ENCODE measurements at regions of chr6 and their contacts with region 1.

Region 1: DNA sequence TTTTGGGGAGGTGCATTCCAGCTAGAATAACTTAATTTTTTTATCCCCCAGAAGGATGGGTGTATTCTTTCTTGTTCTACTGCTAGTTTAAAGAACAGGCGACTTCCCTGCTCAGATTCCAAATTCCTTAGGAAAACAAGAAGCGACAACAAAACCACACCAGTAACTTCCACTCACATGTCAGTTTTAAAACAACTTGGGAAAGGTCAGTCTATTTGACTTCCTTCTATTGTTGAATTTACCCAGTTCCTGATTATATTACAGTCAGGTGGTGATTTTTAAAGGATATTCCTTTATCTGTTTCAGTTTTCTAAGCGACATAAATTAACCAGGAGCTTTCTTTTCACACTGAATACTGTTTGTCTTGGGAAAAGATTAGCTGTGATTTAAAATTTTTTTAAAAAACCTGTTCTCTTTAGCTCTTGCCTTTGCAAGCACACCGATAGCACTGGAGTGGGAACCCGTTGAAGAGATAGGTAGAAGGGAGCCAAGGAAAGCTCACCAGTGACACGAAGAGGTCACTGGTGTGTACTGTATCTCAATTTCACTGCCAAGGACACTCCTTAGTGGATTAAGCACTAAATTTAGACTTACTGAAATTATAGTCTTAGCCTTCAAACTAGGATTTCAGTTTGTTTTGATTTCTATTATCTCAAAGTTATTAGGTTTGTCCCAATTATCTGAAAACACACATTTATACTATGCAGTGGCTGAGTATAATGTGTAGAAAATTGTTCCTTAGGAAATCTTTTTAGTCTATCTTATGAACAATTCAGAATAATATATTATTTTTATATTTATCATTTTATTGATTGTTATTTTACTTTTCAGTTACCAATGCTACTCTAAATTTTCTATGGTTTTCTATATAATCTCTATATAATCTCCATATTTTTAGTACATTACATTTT is 22.3 kb downstream of the MARCKS start:
- DNase-seq: peak; percentile 51
- ATAC-seq: peak; percentile 98

Region 2: DNA sequence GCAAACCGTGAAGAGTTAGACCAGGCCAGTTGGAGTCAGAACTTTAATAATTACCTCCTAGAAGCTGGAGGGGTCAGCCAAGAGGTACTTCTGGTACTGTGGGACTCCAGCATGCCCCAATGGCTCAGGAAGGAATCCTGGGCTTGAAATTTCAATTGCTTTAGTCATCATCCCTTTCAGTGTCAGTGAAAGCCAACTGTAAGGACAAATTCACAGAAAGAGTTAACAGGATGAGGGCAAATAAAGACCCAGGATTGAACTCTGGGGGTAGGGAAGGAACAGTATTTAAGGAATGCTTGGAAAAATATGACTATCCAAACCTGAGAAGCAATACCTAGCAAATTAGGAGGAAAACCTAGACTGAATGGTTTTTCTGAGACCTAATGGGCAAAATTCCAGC is 757.4 kb before region 1 on chr6:
- intact Hi-C with region 1: loop called in 1 of 2 experiments (anchors 10 kb)
- DNase-seq: no peak
- ATAC-seq: peak; percentile 53 to 73

Region 3: DNA sequence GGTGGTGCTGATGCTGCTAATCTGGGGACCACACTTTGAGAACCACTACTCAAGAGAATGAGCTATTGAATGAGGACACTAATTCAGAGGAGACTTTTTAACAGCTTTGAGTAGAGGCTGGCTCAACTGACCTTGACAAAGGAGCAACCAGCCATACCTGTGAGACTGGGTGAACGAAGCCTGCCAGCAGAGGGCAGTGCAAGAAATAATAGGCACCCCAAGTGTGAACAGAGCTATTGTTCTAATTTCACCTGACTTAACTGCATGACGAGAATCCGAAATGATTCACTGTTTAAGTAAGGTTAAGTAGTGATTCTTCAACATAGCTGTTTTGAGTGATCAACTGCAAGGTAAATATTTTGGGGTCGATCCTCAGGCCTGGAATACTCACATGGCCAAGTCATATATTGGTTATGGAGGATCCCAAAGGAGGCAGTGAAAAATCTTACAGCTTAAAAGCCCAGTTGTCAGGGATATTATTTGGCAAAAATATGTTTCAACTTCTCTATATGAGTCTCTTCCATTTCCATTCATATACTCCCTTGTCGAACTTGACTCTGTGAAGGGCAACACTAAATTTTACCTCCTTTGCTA is 572.8 kb before region 1 on chr6:
- intact Hi-C with region 1: loop called in 1 of 2 experiments (anchors 2 kb)
- DNase-seq: peak; percentile 69
- ATAC-seq: peak in 1 of 2 donors; percentile 39